ENCODE measurements at regions of chr2 and their contacts with region 1.

Region 1: GRCh38 chr2:121530212-121530705 is 421 bp upstream of the RNU4ATAC start:
- DNase-seq: peak in 1 of 2 donors; percentile 90
- ATAC-seq: peak; percentile 71 to 86 (median 73)
- H3K4me3 ChIP-seq: peak overlapping the region; percentile 97
- H3K4me3 Mint-ChIP-seq: peak overlapping the region; percentile 89
- H3K27ac ChIP-seq: peak overlapping the region; percentile 100
- H3K27ac Mint-ChIP-seq: peak overlapping the region; percentile 92 to 98
- H3K4me1 ChIP-seq: peaks cover 21% of the 10 kb centered on the region
- H3K4me1 Mint-ChIP-seq: peaks cover 35 to 44% of the 10 kb centered on the region in 2 donors
- H3K27me3 ChIP-seq: no peaks in the 10 kb centered on the region
- H3K27me3 Mint-ChIP-seq: no peaks in the 10 kb centered on the region
- CTCF ChIP-seq: no peak

Region 2: GRCh38 chr2:121333834-121334558 is 196.3 kb before region 1 on chr2:
- intact Hi-C with region 1: no loop called
- DNase-seq: no peak
- ATAC-seq: no peak
- H3K4me3 ChIP-seq: no peak overlapping the region
- H3K4me3 Mint-ChIP-seq: no peak overlapping the region
- H3K27ac ChIP-seq: no peak overlapping the region
- H3K27ac Mint-ChIP-seq: no peak overlapping the region
- H3K4me1 ChIP-seq: peaks cover 3% of the 10 kb centered on the region
- H3K4me1 Mint-ChIP-seq: no peaks in the 10 kb centered on the region
- H3K27me3 ChIP-seq: peaks cover 2% of the 10 kb centered on the region
- H3K27me3 Mint-ChIP-seq: peaks cover 2 to 7% of the 10 kb centered on the region in 2 donors
- CTCF ChIP-seq: no peak

Region 3: GRCh38 chr2:121400201-121400600 is 130.1 kb before region 1 on chr2:
- intact Hi-C with region 1: loop called (anchors 1 kb)
- DNase-seq: no peak
- ATAC-seq: no peak
- H3K4me3 ChIP-seq: no peak overlapping the region
- H3K4me3 Mint-ChIP-seq: no peak overlapping the region
- H3K27ac ChIP-seq: no peak overlapping the region
- H3K27ac Mint-ChIP-seq: no peak overlapping the region
- H3K4me1 ChIP-seq: no peaks in the 10 kb centered on the region
- H3K4me1 Mint-ChIP-seq: peaks cover 0 to 7% of the 10 kb centered on the region in 2 donors
- H3K27me3 ChIP-seq: no peaks in the 10 kb centered on the region
- H3K27me3 Mint-ChIP-seq: no peaks in the 10 kb centered on the region
- CTCF ChIP-seq: no peak

Region 4: DNA sequence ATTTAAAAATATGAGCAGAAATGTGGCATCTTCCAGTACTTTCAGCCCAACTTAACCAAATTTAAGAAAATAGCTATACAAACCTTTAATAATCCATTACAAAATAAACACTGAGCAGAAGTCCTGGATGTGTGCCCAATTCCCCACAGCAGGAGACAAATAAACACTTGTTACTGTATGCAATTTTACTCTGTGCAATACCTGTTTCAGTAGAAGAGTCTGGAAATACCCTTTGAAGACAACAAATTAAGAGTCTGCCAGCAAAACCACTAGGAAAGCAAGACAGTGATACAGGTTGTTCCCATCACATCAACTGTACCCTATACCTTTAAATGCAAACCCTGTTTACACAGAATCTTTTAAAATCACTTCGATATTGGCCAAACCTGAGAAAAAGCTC is 41.0 kb before region 1 on chr2:
- intact Hi-C with region 1: loop called (anchors 5 kb)
- DNase-seq: peak in 1 of 2 donors; percentile 7
- ATAC-seq: peak; percentile 59 to 74 (median 74)
- H3K4me3 ChIP-seq: peak overlapping the region; percentile 21
- H3K4me3 Mint-ChIP-seq: peak overlapping the region; percentile 62
- H3K27ac ChIP-seq: no peak overlapping the region
- H3K27ac Mint-ChIP-seq: peak overlapping the region in 1 of 2 donors; percentile 81
- H3K4me1 ChIP-seq: peaks cover 28% of the 10 kb centered on the region
- H3K4me1 Mint-ChIP-seq: peaks cover 30 to 57% of the 10 kb centered on the region in 2 donors
- H3K27me3 ChIP-seq: no peaks in the 10 kb centered on the region
- H3K27me3 Mint-ChIP-seq: no peaks in the 10 kb centered on the region
- CTCF ChIP-seq: no peak

Region 5: GRCh38 chr2:121561617-121562268 is 31.5 kb after region 1 on chr2:
- intact Hi-C with region 1: no loop called
- DNase-seq: no peak
- ATAC-seq: no peak
- H3K4me3 ChIP-seq: no peak overlapping the region
- H3K4me3 Mint-ChIP-seq: no peak overlapping the region
- H3K27ac ChIP-seq: no peak overlapping the region
- H3K27ac Mint-ChIP-seq: peak overlapping the region; percentile 58 to 67
- H3K4me1 ChIP-seq: peaks cover 3% of the 10 kb centered on the region
- H3K4me1 Mint-ChIP-seq: peaks cover 69 to 76% of the 10 kb centered on the region in 2 donors
- H3K27me3 ChIP-seq: no peaks in the 10 kb centered on the region
- H3K27me3 Mint-ChIP-seq: no peaks in the 10 kb centered on the region
- CTCF ChIP-seq: no peak

Region 6: DNA sequence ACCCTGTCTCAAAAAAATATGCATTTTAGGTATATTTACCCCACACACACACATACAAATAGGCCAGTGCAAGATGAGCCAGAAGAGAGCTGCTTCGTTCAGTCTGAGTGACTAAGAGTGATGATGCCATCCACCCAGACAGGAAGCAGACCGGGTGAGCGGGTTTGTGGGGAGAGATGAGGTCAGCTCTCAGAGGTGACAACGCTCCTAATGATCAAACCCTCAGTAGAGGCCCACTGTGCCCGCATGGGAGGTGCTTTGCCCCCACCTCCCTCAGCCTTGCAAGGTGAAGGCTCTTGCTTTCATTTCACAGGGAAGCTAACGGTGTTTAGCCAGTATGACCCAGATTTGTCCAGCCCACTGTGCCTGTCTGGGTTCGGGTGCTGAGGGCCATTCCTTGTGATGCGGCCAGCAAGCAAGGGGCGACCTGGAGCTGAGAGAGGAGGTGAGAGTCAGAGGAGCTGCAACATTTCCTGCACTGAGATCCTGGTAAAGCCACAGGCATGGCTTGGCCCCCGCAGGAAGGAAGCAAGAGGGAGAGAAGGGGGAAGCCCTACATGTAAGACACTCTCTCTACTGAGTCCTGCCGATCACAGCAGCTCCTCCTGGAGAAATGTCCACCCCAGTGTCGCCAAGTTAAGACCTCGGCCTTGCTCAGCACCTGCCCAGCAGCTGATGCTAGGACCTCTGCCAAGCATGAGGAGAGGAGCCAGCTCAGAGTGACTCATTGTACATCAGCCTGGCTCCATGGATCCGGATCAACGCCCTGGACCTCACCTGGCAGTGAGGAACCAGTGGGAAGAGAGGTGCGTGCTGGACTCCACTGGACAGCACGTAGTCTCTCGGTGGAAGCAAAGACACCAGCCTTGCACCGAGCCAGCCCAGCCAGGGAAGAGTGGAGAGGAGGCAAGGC is 169.4 kb after region 1 on chr2:
- intact Hi-C with region 1: loop called (anchors 1 kb)
- DNase-seq: peak; percentile 86 to 92
- ATAC-seq: peak; percentile 86 to 95 (median 91)
- H3K4me3 ChIP-seq: peak overlapping the region; percentile 25
- H3K4me3 Mint-ChIP-seq: peak overlapping the region; percentile 95
- H3K27ac ChIP-seq: peak overlapping the region; percentile 88
- H3K27ac Mint-ChIP-seq: peak overlapping the region; percentile 97
- H3K4me1 ChIP-seq: peaks cover 29% of the 10 kb centered on the region
- H3K4me1 Mint-ChIP-seq: peaks cover 37 to 39% of the 10 kb centered on the region in 2 donors
- H3K27me3 ChIP-seq: no peaks in the 10 kb centered on the region
- H3K27me3 Mint-ChIP-seq: no peaks in the 10 kb centered on the region
- CTCF ChIP-seq: no peak

Region 7: GRCh38 chr2:121736462-121737341 is 206.4 kb after region 1 on chr2 and contains the start of gene NIFK:
- intact Hi-C with region 1: loop called (anchors 2 kb)
- DNase-seq: peak; percentile 98 to 99
- ATAC-seq: peak; percentile 89 to 97 (median 90)
- H3K4me3 ChIP-seq: peak within 1 kb of the TSS; percentile 85
- H3K4me3 Mint-ChIP-seq: peak within 1 kb of the TSS; percentile 99
- H3K27ac ChIP-seq: peak within 1 kb of the TSS; percentile 76
- H3K27ac Mint-ChIP-seq: peak within 1 kb of the TSS; percentile 96 to 98
- H3K4me1 ChIP-seq: peaks cover 23% of the 10 kb centered on the region
- H3K4me1 Mint-ChIP-seq: peaks cover 35 to 48% of the 10 kb centered on the region in 2 donors
- H3K27me3 ChIP-seq: no peaks in the 10 kb centered on the region
- H3K27me3 Mint-ChIP-seq: no peaks in the 10 kb centered on the region
- CTCF ChIP-seq: no peak
- total RNA-seq, gene NIFK: 32.7 to 37.7 (median 33.5) TPM